ENCODE measurements at regions of chr1 and their contacts with region 1.

Region 1: GRCh38 chr1:172357753-172358385 is 62.6 kb upstream of the C1orf105 start:
- DNase-seq: no peak
- ATAC-seq: peak in 2 of 4 donors; percentile 5 to 26
- H3K4me3 ChIP-seq: peak overlapping the region in 7 of 12 donors; percentile 0 to 37 (median 12)
- H3K27ac ChIP-seq: peak overlapping the region; percentile 42 to 91 (median 76)
- H3K4me1 ChIP-seq: peaks cover 6 to 63% (median 39%) of the 10 kb centered on the region in 12 donors
- H3K27me3 ChIP-seq: no peaks in the 10 kb centered on the region
- CTCF ChIP-seq: no peak
- POLR2A ChIP-seq: no peak

Region 2: DNA sequence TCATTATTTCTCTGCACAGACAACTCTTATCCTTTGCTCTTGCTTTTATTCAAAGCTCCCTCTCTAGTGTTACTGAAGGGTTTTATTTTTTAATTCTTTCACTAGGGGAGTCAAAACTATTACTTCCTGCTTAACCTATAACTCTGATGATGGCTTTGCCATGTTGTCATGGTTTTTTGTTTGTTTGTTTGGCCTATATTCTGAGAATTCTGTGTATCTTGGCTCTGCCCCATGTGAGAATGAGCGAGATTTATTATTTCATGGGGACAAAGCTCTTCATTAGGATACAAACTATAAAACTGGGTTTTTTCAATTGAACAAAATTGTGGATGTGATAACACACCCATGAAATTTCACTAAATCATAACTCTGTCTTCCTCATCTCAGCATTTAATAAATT is 127.9 kb before region 1 on chr1:
- intact Hi-C with region 1: no loop called
- DNase-seq: no peak
- ATAC-seq: no peak
- H3K4me3 ChIP-seq: no peak overlapping the region
- H3K27ac ChIP-seq: no peak overlapping the region
- H3K4me1 ChIP-seq: no peaks in the 10 kb centered on the region
- H3K27me3 ChIP-seq: no peaks in the 10 kb centered on the region
- CTCF ChIP-seq: no peak
- POLR2A ChIP-seq: no peak

Region 3: GRCh38 chr1:172322219-172323061 is 35.4 kb before region 1 on chr1:
- intact Hi-C with region 1: loop called in 1 of 10 experiments (anchors 5 kb)
- DNase-seq: peak; percentile 27 to 70 (median 44)
- ATAC-seq: peak; percentile 80 to 96 (median 92)
- H3K4me3 ChIP-seq: peak overlapping the region in 4 of 12 donors; percentile 3 to 22 (median 18)
- H3K27ac ChIP-seq: peak overlapping the region; percentile 23 to 69 (median 58)
- H3K4me1 ChIP-seq: peaks cover 0 to 30% (median 10%) of the 10 kb centered on the region in 12 donors
- H3K27me3 ChIP-seq: no peaks in the 10 kb centered on the region
- CTCF ChIP-seq: no peak
- POLR2A ChIP-seq: no peak

Region 4: DNA sequence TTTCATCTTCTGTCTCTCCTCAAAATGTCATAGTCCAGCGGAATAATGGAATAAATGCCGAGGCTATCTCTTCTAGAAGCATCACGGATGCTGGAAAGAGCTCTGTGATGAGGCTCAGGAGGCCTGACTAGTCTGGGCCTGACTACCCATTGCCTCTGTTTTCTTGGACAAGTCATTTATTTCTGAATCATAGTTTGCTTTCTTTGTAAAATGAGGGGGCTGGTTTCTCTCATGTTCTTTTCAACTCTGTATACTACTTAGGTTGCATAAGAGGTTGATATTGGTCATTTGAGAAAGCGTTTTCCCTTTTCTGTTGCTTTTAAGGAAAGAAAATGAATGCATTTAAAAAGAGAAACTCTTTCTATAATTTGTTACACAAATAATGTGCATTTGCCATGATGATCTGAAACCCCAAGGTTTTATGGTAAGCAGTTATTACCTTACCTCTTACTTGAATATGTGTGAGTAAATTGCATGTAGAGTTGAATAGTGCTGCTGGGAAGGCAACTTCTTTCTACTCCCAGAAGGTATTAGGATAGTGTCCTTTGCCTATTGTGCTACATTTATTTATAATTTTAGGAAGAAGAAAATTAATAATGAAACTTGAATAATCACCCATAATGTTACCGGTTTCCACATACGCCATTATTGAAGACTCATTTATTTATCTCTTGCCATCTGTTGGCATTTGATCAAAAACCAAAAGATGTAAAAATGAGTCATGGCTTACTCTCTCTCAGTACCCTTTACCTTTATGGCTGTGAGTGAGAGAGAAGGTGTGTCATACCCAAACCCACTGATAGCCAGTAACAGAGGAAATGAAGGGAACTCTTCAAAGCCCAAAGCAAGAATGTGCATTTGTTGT is 480.2 kb after region 1 on chr1:
- intact Hi-C with region 1: no loop called
- DNase-seq: no peak
- ATAC-seq: no peak
- H3K4me3 ChIP-seq: no peak overlapping the region
- H3K27ac ChIP-seq: no peak overlapping the region
- H3K4me1 ChIP-seq: peaks cover 0 to 4% (median 0%) of the 10 kb centered on the region in 12 donors
- H3K27me3 ChIP-seq: no peaks in the 10 kb centered on the region
- CTCF ChIP-seq: no peak
- POLR2A ChIP-seq: no peak

Measured in heart left ventricle (tissue), 16 donors.